Activated CD4-positive, alpha-beta T cell treated with anti-CD3 and anti-CD28 coated beads, Interleukin-2, amount 10 ng/mL, durations not matched to agents 7 days and 5 days (primary cell): ENCODE measurements at regions of chr1 and their contacts with region 1.

Region 1: DNA sequence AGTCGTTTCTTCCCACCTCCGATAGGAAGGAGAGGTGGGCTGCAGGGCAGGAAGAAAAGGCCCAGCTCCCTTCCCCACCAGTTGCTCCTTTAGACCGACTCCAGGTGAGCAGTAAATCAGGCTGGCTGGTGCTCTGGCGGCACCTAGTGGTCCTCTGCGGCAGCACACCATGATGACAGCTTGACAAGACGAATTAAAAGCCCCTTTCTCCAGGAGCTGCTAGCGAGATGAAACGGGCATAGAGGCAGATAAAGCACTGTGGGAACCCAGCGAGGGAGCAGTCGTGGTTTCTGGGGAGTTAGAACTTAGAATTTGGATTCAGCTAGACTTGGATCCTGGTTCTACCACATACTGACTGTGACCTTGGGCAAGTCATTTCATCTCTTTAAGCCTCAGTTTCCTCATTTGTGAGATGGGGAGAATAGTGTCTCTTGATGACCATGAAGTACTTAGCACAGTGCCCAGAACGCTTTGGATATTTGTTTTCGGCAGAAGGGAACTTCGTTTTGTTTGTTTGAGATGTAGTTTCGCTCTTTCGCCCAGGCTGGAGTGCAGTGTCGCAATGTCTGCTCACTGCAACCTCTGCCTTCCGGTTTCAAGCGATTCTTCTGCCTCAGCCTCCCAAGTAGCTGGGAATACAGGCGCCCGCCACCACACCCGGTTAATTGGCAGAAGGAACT is 21.8 kb upstream of the COL9A2 start:
- DNase-seq: peak; percentile 91
- H3K4me3 Mint-ChIP-seq: no peak overlapping the region
- H3K27ac Mint-ChIP-seq: peak overlapping the region; percentile 2
- H3K4me1 Mint-ChIP-seq: peaks cover 43% of the 10 kb centered on the region
- H3K27me3 Mint-ChIP-seq: no peaks in the 10 kb centered on the region

Region 2: GRCh38 chr1:40090652-40091355 is 248.1 kb before region 1 on chr1:
- CTCF ChIA-PET with region 1: interaction called, 23 read pairs
- POLR2A ChIA-PET with region 1: no interaction called
- DNase-seq: no peak
- H3K4me3 Mint-ChIP-seq: no peak overlapping the region
- H3K27ac Mint-ChIP-seq: no peak overlapping the region
- H3K4me1 Mint-ChIP-seq: peaks cover 25% of the 10 kb centered on the region
- H3K27me3 Mint-ChIP-seq: no peaks in the 10 kb centered on the region

Region 3: DNA sequence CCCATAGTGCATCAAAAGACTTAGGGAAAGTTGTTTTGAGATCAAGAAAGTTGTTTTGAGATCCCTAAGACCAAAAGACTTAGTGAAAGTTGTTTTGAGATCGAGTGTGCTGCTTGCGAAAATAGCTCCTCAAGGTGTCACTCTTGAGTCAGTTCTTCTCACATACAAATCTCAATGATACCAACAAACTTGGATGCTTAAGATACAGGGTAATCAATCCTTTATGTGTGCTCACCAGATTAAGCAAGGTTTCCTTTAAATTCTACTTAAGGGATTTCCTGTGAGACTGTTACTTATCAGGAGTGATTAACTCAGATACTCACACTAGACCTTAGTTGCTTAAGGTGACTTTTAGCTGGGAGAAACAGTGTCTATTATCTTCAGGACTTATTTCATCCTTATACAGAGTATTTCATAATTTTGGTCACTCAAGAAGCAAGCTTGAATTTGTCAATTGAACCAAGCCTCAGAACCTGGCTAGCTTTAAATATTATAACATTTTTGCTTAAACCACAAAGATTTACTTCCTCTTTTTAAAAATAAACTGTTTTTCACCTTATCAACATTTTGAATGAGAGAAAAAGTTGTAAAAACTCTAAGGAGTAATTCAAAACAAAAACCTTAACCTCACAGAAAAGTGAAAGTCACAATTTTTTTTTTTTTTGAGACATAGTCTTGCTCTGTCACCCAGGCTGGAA is 185.7 kb before region 1 on chr1:
- CTCF ChIA-PET with region 1: interaction called, 98 read pairs
- POLR2A ChIA-PET with region 1: no interaction called
- DNase-seq: peak; percentile 64
- H3K4me3 Mint-ChIP-seq: no peak overlapping the region
- H3K27ac Mint-ChIP-seq: no peak overlapping the region
- H3K4me1 Mint-ChIP-seq: peaks cover 10% of the 10 kb centered on the region
- H3K27me3 Mint-ChIP-seq: peaks cover 2% of the 10 kb centered on the region

Region 4: GRCh38 chr1:40197656-40198055 is 141.2 kb before region 1 on chr1:
- CTCF ChIA-PET with region 1: no interaction called
- POLR2A ChIA-PET with region 1: no interaction called
- DNase-seq: no peak
- H3K4me3 Mint-ChIP-seq: no peak overlapping the region
- H3K27ac Mint-ChIP-seq: no peak overlapping the region
- H3K4me1 Mint-ChIP-seq: peaks cover 6% of the 10 kb centered on the region
- H3K27me3 Mint-ChIP-seq: no peaks in the 10 kb centered on the region

Region 5: GRCh38 chr1:40256401-40257084 is 82.3 kb before region 1 on chr1:
- CTCF ChIA-PET with region 1: no interaction called
- POLR2A ChIA-PET with region 1: no interaction called
- DNase-seq: no peak
- H3K4me3 Mint-ChIP-seq: peak overlapping the region; percentile 88
- H3K27ac Mint-ChIP-seq: peak overlapping the region; percentile 100
- H3K4me1 Mint-ChIP-seq: peaks cover 57% of the 10 kb centered on the region
- H3K27me3 Mint-ChIP-seq: no peaks in the 10 kb centered on the region

Region 6: GRCh38 chr1:40352126-40352525 is 13.2 kb after region 1 on chr1:
- CTCF ChIA-PET with region 1: interaction called, 13 read pairs
- POLR2A ChIA-PET with region 1: interaction called, 3 read pairs
- DNase-seq: no peak
- H3K4me3 Mint-ChIP-seq: no peak overlapping the region
- H3K27ac Mint-ChIP-seq: no peak overlapping the region
- H3K4me1 Mint-ChIP-seq: no peaks in the 10 kb centered on the region
- H3K27me3 Mint-ChIP-seq: no peaks in the 10 kb centered on the region

Region 7: DNA sequence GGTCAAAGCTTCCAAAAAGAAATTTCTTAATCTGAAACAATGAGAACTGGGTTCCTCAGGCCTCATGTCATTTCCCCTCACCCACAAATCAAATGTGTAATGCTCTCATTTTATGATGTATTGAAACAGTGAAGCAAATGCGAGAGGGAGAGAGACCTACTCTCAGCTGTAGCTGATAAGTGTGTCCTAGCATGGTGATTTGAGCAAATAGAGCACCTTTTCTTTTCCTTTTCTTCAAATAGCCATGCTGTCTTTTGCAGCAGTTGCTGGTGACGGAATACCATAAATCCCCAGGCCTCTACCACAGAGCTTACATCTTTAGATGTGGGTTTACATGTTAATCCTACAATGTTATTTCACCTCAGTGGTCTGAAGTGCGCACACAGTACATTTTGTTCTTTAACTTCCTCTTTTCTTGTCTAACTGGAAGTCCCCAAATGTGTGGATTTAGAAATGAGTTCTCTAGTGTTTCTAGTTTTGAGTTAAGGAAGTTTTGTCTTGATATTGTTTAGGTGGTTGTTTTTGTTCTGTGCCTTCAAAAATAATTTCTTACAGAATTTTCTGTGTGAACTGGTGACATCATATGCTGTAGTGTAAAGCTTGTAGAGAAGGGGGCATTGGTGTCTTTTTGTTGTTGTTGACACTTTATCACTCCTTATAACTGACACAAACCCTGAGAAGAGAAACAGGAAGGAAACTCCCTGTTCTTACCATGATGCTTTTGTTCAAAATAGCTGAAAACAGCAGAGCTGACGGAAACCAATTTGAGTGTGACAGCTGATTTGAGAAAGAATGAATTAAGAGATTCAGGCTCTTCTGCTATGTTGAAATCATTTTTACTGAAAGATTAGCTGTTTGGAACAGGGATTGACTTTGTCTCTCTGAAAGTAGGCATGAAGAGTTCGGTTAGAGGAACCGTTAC is 46.8 kb after region 1 on chr1:
- CTCF ChIA-PET with region 1: interaction called, 19 read pairs
- POLR2A ChIA-PET with region 1: interaction called, 3 read pairs
- DNase-seq: peak; percentile 83
- H3K4me3 Mint-ChIP-seq: peak overlapping the region; percentile 78
- H3K27ac Mint-ChIP-seq: peak overlapping the region; percentile 99
- H3K4me1 Mint-ChIP-seq: peaks cover 92% of the 10 kb centered on the region
- H3K27me3 Mint-ChIP-seq: no peaks in the 10 kb centered on the region